Heart right ventricle (tissue), 16 donors: ENCODE measurements at regions of chr1 and their contacts with region 1.

Region 1: DNA sequence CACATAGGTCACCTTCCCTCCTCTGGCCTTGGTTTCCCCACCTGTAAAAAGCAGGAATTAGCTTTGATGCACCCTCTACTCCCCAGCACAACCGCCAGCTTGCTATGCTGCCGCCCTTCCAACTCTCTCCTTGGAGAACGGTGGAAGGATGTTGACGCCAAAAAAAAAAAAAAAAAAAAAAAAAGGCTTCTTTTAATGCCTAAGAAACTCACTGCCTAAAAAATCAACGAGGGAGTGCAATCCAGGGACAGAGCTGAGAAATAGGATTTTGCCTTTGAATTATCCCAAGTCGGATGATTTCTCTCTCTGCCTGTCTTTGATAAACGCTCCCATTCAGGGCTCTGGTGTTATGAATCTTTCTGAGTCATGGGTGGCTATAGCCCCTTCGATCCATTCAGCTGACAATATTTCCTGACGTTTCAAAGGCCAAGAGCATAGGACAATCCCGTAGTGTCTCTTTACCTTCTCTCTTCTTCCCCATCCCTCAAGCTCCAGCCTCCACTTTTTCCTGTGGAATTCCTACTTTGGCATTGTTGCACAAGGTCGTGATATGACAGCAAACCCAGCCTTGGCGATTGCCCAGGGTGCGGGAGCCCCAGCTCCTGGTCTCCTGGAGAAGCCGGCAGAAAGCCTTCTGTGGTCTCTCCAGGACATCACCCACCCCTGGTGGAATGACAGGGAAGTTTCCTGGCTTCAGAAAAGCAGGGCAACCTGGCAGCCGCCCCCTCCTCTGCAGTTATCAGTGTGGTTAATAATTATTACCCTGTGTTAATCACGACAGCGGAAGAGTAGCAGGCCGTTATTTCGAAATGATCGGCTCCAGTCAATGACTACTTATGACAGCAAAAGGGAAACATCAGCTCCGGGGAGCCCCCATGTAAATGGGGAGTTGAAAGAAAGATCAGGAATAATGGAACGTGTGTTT is 8.0 kb upstream of the PLXNA2 start:
- DNase-seq: peak in 1 of 2 donors; percentile 30
- ATAC-seq: peak in 3 of 8 donors; percentile 9 to 52 (median 34)
- H3K4me3 ChIP-seq: peak overlapping the region in 1 of 10 donors; percentile 13
- H3K27ac ChIP-seq: no peak overlapping the region
- H3K4me1 ChIP-seq: peaks cover 0 to 18% (median 6%) of the 10 kb centered on the region in 9 donors
- H3K27me3 ChIP-seq: peaks cover 0 to 16% (median 0%) of the 10 kb centered on the region in 7 donors
- CTCF ChIP-seq: peak in 5 of 9 donors; percentile 28 to 78 (median 60)

Region 2: DNA sequence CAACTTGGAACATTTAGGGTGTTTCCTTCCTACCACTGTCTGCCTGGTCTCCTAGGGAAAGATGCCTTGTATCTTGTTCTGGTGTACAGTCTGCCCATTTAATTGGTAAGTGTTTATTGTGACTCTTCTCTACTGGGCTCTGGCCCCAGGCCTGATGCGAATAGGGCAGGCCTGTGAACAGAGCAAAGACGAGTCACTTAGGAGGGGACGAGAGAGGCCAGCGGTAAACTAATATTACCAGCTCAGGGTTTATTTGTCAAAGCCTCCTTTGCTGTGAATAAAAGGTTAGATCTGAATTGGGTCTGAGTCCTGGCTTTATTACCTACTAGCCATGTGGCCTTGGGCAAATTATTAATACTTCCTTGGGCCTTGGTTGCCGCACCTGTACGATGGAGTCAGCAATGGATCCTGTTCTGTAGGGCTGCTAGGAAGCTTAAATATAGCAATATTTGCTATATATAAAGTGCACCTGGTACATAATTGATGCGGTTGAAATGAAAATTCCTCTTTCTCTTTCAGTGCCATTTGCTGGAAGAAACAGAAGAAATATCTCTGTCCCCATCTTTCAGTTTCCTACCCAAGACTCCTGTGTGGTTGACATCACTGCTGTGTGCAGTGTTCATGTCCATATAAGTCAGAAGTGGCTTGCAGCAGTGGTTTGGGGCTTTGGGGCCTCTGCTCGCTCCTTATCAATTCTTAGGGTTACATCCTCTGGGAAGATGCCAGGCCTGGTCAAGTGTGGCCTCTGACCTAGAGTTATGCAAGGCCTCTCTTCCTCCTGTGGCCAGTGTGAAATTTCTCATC is 1535.1 kb before region 1 on chr1:
- intact Hi-C with region 1: no loop called
- DNase-seq: no peak
- ATAC-seq: peak in 2 of 8 donors; percentile 17 to 21
- H3K4me3 ChIP-seq: no peak overlapping the region
- H3K27ac ChIP-seq: peak overlapping the region in 9 of 10 donors; percentile 47 to 75 (median 61)
- H3K4me1 ChIP-seq: peaks cover 21 to 97% (median 95%) of the 10 kb centered on the region in 9 donors
- H3K27me3 ChIP-seq: no peaks in the 10 kb centered on the region
- CTCF ChIP-seq: no peak

Region 3: DNA sequence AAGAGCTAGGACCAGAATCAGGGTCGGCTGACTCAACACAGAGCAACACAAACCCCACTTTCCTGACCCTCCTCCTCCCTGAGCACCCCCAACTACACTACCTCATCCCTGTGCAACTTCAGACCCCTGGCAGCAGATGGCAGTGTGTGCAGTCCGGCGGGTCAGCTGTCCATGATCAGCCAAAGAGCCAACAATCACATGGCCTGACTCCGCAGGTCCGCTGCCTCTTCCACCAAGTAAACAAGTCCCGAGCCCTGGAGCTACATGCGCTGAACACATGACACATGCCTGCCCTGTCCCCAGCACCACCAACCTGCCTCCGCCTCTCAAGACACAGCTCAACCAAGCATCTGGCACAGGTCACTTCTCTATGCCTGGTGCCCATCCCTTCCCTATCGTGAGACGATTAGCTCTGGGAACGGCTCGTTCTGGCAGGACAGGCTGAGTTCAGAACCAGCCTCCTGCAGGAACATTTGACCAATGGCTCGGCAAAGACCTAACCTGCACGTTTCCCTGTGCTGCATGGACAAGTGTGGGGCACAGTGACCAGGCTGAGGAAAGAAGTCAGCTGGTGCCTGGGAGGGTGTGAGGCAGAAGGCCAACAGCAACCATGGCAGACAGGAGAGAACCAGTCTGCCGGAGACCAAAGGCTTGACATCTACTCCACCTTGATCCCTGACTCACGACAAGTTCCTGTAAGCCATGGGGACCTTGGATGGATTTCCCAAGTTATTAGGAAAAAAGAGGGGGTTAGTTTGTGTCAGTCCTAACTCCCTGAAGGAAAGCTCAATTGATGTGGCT is 440.1 kb before region 1 on chr1:
- intact Hi-C with region 1: no loop called
- DNase-seq: peak in 1 of 2 donors; percentile 69
- ATAC-seq: peak; percentile 15 to 71 (median 38)
- H3K4me3 ChIP-seq: peak overlapping the region in 4 of 10 donors; percentile 2 to 24 (median 14)
- H3K27ac ChIP-seq: peak overlapping the region; percentile 50 to 95 (median 75)
- H3K4me1 ChIP-seq: peaks cover 73 to 100% (median 97%) of the 10 kb centered on the region in 9 donors
- H3K27me3 ChIP-seq: no peaks in the 10 kb centered on the region
- CTCF ChIP-seq: peak; percentile 22 to 66 (median 55)

Region 4: DNA sequence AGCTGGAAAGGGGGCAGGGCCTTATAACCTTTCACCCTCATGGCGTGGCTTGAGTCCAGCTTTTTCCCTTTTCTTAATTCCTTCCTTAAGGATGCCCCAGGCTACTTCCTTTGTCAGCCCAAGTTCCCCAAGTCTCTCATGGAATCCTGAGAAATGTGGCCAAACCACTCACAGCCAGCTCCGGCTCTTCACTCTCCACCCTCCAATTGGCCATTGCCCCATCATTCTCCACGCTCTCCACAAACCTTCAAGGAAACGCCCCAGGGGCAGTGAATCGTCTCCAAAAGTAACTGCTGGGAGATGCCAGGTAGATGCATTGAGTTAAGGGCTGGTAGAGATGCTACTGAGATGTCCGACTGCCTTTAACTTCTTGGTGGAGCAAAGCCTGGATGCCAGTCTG is 227.8 kb before region 1 on chr1:
- intact Hi-C with region 1: loop called in 4 of 10 experiments (anchors 5 kb)
- DNase-seq: no peak
- ATAC-seq: no peak
- H3K4me3 ChIP-seq: no peak overlapping the region
- H3K27ac ChIP-seq: no peak overlapping the region
- H3K4me1 ChIP-seq: peaks cover 0 to 27% (median 7%) of the 10 kb centered on the region in 9 donors
- H3K27me3 ChIP-seq: no peaks in the 10 kb centered on the region
- CTCF ChIP-seq: no peak